ENCODE measurements at regions of chr1 and their contacts with region 1.

Region 1: DNA sequence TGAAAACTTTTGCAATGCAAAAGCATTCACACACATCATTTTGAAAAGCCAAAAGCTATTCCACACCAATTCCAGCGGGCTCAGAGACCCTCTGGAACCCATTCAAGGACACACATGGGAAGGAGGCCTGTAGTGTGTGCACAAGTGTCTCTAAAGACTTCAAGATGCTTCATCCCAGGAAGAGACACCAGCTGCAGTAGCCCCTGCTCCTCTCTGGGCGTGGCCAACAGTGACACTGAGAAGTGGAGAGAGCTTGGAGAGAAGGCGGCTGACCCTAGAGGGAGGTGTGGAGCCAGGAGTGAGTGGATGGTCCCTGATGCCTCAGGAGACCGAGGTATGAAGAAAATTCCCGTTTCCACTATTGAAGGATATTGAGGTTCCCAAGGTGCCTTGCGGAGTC is 14.9 kb upstream of the TNNI1 start:
- DNase-seq: no peak
- H3K4me3 Mint-ChIP-seq: no peak overlapping the region
- H3K27ac Mint-ChIP-seq: no peak overlapping the region
- H3K4me1 Mint-ChIP-seq: peaks cover 8% of the 10 kb centered on the region
- H3K27me3 Mint-ChIP-seq: peaks cover 20% of the 10 kb centered on the region

Region 2: DNA sequence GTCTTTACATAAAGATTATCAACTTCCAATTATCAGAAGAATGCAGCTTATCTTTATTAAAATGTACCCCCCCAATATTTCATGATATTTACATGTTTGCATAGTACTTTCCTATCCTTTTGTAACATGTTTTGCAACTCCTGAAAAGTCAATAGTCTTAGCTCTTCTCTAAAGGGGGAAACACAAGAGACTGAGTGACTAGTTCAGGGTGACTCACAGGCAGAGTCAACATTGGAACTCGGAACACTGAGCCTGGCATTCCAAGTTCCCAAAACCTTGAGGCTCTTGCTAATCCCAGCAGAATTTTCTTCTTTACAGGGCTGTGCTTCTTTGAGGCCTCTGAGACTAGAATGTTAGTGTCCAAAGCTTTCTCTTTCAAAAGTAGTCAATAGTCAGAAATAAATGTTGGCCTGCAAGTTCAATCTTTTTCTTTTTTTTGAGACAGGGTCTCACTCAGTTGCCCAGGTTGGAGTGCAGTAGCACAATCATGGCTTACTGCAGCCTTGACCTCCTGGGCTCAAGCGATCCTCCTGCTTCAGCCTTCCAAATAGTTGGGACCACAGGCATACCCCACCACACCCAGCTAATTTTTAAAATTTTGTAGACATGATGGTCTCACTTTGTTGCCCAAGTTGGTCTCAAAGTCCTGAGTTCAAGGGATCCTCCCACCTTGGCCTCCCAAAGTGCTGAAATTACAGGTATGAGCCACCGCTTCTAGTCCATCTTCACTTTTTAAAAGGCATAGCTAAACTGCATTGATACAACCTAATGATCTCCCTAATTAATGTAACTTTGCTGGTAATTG is 1064.1 kb before region 1 on chr1:
- intact Hi-C with region 1: no loop called
- DNase-seq: no peak
- H3K4me3 Mint-ChIP-seq: no peak overlapping the region
- H3K27ac Mint-ChIP-seq: no peak overlapping the region
- H3K4me1 Mint-ChIP-seq: peaks cover 10% of the 10 kb centered on the region
- H3K27me3 Mint-ChIP-seq: no peaks in the 10 kb centered on the region

Region 3: GRCh38 chr1:201408176-201408833 is 28.1 kb before region 1 on chr1:
- intact Hi-C with region 1: no loop called
- DNase-seq: peak; percentile 52
- H3K4me3 Mint-ChIP-seq: no peak overlapping the region
- H3K27ac Mint-ChIP-seq: no peak overlapping the region
- H3K4me1 Mint-ChIP-seq: no peaks in the 10 kb centered on the region
- H3K27me3 Mint-ChIP-seq: peaks cover 4% of the 10 kb centered on the region

Region 4: DNA sequence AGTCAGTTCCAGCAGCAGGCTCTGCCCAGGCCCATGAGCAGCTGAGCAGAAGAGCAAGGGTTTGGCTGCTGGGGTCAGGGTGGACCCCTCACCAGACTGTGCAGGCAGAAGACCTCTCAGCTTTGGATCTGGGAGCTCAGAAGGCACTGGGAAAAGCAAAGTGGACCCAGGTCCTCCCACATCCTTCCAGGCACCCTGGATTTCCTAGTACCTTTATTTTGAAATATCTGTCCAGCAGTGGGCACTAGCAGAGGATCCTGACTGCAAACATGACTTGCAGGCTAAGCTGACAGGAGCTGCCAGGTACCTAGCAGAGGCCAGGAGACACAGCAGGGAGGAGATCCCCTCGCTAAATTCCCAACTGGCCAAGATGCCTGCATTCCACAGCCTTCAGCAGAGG is 19.3 kb after region 1 on chr1:
- intact Hi-C with region 1: loop called (anchors 1 kb)
- DNase-seq: no peak
- H3K4me3 Mint-ChIP-seq: no peak overlapping the region
- H3K27ac Mint-ChIP-seq: no peak overlapping the region
- H3K4me1 Mint-ChIP-seq: peaks cover 31% of the 10 kb centered on the region
- H3K27me3 Mint-ChIP-seq: peaks cover 5% of the 10 kb centered on the region

Region 5: DNA sequence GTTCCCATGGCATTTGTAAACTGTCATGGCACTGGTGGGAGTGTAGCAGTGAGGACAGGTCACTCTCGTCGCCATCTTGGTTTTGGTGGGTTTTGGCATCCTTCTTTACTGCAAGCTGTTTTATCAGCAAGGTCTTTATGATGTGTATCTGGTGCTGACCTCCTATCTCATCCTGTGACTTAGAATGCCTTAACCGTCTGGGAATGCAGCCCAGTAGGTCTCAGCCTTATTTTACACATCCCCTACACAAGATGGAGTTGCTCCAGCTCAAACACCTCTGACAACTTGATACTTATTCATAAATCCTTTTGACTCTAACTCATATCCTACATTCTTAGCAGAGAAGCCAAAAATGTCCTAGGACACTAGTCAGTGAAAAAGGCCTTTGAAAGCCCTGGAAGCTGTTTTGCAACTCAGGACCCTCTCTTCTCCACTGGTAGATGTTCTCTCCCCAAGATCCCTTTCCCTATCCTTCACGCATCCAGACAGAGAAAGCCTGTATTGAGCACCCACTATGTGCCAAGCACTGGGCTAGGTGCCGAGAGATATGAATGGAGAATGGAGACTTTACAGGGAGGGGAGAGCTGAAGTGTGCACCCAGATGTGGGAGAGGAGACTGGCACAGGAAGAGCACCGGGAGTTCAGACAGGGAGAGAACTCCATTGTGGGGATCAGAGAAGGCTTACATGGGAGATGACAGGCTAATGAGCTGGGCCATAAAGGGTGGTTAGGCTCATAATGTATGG is 77.3 kb after region 1 on chr1:
- intact Hi-C with region 1: loop called (anchors 1 kb)
- DNase-seq: no peak
- H3K4me3 Mint-ChIP-seq: no peak overlapping the region
- H3K27ac Mint-ChIP-seq: no peak overlapping the region
- H3K4me1 Mint-ChIP-seq: peaks cover 15% of the 10 kb centered on the region
- H3K27me3 Mint-ChIP-seq: no peaks in the 10 kb centered on the region